ENCODE measurements at regions of chr7 and their contacts with region 1.

Region 1: GRCh38 chr7:7157177-7157886 is 25.0 kb upstream of the C1GALT1 start:
- DNase-seq: no peak
- ATAC-seq: no peak
- H3K4me3 ChIP-seq: no peak overlapping the region
- H3K27ac ChIP-seq: no peak overlapping the region
- H3K4me1 ChIP-seq: no peaks in the 10 kb centered on the region
- H3K27me3 ChIP-seq: peaks cover 3% of the 10 kb centered on the region; the same call in 1 of the 2 replicates
- CTCF ChIP-seq: no peak

Region 2: GRCh38 chr7:6447581-6448199 is 709.6 kb before region 1 on chr7 and contains the start of gene DAGLB:
- CTCF ChIA-PET with region 1: no interaction called
- POLR2A ChIA-PET with region 1: no interaction called
- in situ Hi-C with region 1: no loop called
- intact Hi-C with region 1: no loop called
- DNase-seq: peak; percentile 90
- ATAC-seq: peak; percentile 81
- H3K4me3 ChIP-seq: peak within 1 kb of the TSS; percentile 81 to 84
- H3K27ac ChIP-seq: peak within 1 kb of the TSS; percentile 89
- H3K4me1 ChIP-seq: peaks cover 18% of the 10 kb centered on the region
- H3K27me3 ChIP-seq: no peaks in the 10 kb centered on the region
- CTCF ChIP-seq: no peak
- total RNA-seq, gene DAGLB: 22.3 TPM

Region 3: DNA sequence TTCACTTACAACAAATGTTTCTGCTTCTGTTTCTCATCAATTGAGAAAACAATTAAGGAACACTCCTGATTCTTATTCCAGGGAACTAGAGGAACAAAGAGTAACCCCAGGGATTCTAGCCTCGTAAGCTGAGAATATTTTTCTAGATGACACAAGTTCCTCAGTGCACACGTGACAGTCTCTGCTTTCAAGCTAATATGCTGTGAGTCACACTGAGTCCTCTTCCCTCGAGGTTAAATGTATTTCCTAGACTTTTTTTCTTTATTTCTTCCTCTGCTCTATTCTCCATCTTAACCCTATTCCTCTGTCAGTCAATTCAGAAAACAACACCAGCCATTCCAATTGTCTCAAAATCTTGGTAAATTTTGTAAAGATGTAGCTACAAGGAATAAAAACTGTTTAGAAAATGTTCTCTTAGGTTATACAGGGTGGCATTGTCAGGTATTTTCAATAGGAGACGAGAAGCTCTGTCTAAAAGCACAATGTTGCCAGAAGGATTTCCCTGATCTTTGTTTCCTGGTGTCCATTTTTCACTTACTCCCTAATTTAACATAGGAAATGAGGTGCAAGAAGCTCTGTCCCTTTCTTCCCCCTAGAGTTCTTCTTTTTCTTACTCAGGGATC is 19.2 kb after region 1 on chr7:
- CTCF ChIA-PET with region 1: no interaction called
- POLR2A ChIA-PET with region 1: no interaction called
- in situ Hi-C with region 1: no loop called
- intact Hi-C with region 1: loop called (anchors 2 kb)
- DNase-seq: peak; percentile 80
- ATAC-seq: peak; percentile 77; the same call in 1 of the 2 replicates
- H3K4me3 ChIP-seq: no peak overlapping the region; a peak in 1 of 4 replicates
- H3K27ac ChIP-seq: no peak overlapping the region
- H3K4me1 ChIP-seq: 0 out of 2 replicates have a peak, but pooled peaks cover 8% of the 10 kb centered on the region
- H3K27me3 ChIP-seq: no peaks in the 10 kb centered on the region
- CTCF ChIP-seq: no peak

Region 4: GRCh38 chr7:7201578-7202374 is 44.4 kb after region 1 on chr7:
- CTCF ChIA-PET with region 1: no interaction called
- POLR2A ChIA-PET with region 1: no interaction called
- in situ Hi-C with region 1: no loop called
- intact Hi-C with region 1: no loop called
- DNase-seq: no peak
- ATAC-seq: peak; percentile 83
- H3K4me3 ChIP-seq: peak overlapping the region in 1 of 2 experiments; percentile 10; a peak in 1 of 4 replicates
- H3K27ac ChIP-seq: no peak overlapping the region
- H3K4me1 ChIP-seq: peaks cover 8% of the 10 kb centered on the region; the same call in 1 of the 2 replicates
- H3K27me3 ChIP-seq: no peaks in the 10 kb centered on the region
- CTCF ChIP-seq: no peak

Region 5: DNA sequence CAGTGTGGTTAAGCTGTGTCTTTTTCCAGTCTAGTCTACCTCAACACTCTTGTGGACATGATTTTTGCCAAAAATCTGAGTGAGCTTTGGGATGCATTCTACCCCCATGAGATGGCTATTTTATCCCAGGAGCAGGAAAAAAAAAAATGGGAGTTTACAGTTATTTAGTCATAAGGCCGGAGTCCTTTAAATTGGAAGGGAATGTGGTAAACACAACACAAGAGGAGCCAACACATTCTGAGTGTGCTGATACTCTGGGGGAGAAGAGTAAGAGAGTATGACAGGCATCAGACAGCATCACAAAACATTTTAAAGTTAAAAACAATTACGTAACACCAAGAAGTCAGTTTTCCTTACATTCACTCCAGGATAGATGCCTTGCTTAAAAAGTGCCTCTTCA is 71.1 kb after region 1 on chr7:
- CTCF ChIA-PET with region 1: no interaction called
- POLR2A ChIA-PET with region 1: no interaction called
- in situ Hi-C with region 1: no loop called
- intact Hi-C with region 1: no loop called
- DNase-seq: no peak
- ATAC-seq: no peak
- H3K4me3 ChIP-seq: no peak overlapping the region
- H3K27ac ChIP-seq: no peak overlapping the region
- H3K4me1 ChIP-seq: no peaks in the 10 kb centered on the region
- H3K27me3 ChIP-seq: no peaks in the 10 kb centered on the region
- CTCF ChIP-seq: no peak

Region 6: DNA sequence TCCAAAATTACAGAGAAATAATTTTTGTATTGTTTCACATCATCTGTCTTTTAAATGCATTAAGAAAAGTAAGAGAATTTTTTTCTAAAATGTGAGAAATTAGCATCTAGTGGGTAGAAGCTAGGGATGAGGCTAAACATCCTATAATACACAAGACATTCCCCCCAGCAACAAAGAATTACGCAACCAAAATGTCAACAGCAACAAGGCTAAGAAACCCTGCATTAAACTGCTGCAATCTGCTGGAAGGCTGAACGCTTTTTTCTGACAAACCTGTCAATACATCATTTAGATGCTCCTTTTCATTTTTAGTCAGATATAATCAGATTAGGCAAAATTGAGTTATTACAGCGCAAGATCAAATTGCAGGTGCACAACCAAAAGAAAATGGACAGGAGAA is 187.3 kb after region 1 on chr7:
- CTCF ChIA-PET with region 1: no interaction called
- POLR2A ChIA-PET with region 1: no interaction called
- in situ Hi-C with region 1: no loop called
- intact Hi-C with region 1: no loop called
- DNase-seq: no peak
- ATAC-seq: no peak
- H3K4me3 ChIP-seq: no peak overlapping the region
- H3K27ac ChIP-seq: no peak overlapping the region
- H3K4me1 ChIP-seq: no peaks in the 10 kb centered on the region
- H3K27me3 ChIP-seq: peaks cover 11% of the 10 kb centered on the region
- CTCF ChIP-seq: no peak

Measured in Panc1 (cell line).